PC-3 (cell line): ENCODE measurements at regions of chr1 and their contacts with region 1.

Region 1: DNA sequence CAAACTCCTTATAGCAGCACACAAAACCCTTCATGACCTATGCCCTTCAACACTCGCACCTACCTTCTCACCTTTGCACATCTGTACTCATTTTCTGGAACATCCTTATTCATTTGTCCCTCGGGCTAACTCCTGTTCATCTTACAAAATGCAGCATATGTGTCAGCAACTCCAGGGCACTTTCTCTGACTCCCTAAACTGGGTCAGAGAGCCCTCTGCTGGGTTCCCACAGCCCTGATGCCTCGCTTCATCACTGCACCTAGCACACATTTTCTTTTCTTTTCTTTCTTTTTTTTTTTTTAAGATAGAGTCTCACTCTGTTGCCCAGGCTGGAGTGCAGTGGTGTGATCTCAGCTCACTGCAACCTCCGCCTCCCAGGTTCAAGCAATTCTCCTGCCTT is 54.0 kb downstream of the RAB3B start:
- DNase-seq: peak; percentile 44
- ATAC-seq: peak; percentile 73
- H3K4me3 ChIP-seq: no peak overlapping the region
- H3K27ac ChIP-seq: no peak overlapping the region
- H3K4me1 ChIP-seq: peaks cover 6% of the 10 kb centered on the region; the same call in 1 of the 2 replicates
- H3K27me3 ChIP-seq: no peaks in the 10 kb centered on the region
- CTCF ChIP-seq: peak; percentile 40

Region 2: GRCh38 chr1:51843948-51844347 is 92.6 kb before region 1 on chr1:
- CTCF ChIA-PET with region 1: no interaction called
- POLR2A ChIA-PET with region 1: interaction called, 18 read pairs
- intact Hi-C with region 1: no loop called
- DNase-seq: no peak
- ATAC-seq: no peak
- H3K4me3 ChIP-seq: no peak overlapping the region
- H3K27ac ChIP-seq: no peak overlapping the region
- H3K4me1 ChIP-seq: no peaks in the 10 kb centered on the region
- H3K27me3 ChIP-seq: no peaks in the 10 kb centered on the region
- CTCF ChIP-seq: no peak

Region 3: GRCh38 chr1:51916587-51917405 is 19.7 kb before region 1 on chr1:
- CTCF ChIA-PET with region 1: no interaction called
- POLR2A ChIA-PET with region 1: no interaction called
- intact Hi-C with region 1: no loop called
- DNase-seq: peak; percentile 43
- ATAC-seq: no peak
- H3K4me3 ChIP-seq: no peak overlapping the region
- H3K27ac ChIP-seq: no peak overlapping the region
- H3K4me1 ChIP-seq: peaks cover 21% of the 10 kb centered on the region
- H3K27me3 ChIP-seq: no peaks in the 10 kb centered on the region
- CTCF ChIP-seq: no peak